Natural killer cell (primary cell): ENCODE measurements at regions of chr1 and their contacts with region 1.

Region 1: GRCh38 chr1:214471458-214471857 is 79.9 kb downstream of the PTPN14 start:
- DNase-seq: no peak
- ATAC-seq: no peak
- H3K4me3 ChIP-seq: no peak overlapping the region
- H3K4me3 Mint-ChIP-seq: no peak overlapping the region
- H3K27ac ChIP-seq: no peak overlapping the region
- H3K27ac Mint-ChIP-seq: no peak overlapping the region
- H3K4me1 ChIP-seq: no peaks in the 10 kb centered on the region
- H3K4me1 Mint-ChIP-seq: no peaks in the 10 kb centered on the region
- H3K27me3 ChIP-seq: no peaks in the 10 kb centered on the region
- H3K27me3 Mint-ChIP-seq: peaks cover 14 to 48% of the 10 kb centered on the region in 2 donors
- CTCF ChIP-seq: no peak

Region 2: DNA sequence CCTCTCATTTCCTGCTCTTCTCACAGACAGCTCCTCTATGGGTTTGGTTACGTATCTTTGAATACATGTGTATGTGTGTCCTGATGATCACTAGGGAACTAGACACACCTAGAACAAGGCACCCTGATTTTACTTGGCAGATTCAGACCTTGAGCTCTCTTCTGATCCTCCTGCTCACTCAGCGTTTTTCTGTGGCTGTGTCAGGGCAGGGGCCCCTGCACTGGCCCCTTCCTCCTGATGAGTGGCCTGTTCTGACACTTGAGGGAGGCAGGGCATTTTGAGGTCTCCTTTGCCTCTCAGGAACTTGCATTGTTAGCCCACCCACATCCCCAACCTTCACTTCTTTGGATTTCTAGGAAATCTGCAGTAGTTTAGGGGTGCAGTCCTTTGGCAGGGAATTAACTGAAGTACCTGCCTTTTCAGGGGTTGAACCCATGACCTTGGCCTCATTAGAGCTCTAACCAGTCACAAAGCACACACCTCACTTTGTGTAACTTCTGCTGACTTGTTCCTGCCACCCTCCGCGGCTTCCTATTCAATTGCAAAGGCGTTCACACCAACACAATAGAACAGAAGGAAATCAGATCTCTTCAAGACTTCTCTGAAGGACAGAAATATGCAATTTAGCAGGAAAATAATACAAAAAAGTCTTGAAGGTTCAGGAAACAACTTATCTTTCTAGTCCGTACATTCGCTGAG is 181.7 kb before region 1 on chr1:
- intact Hi-C with region 1: no loop called
- DNase-seq: no peak
- ATAC-seq: no peak
- H3K4me3 ChIP-seq: no peak overlapping the region
- H3K4me3 Mint-ChIP-seq: no peak overlapping the region
- H3K27ac ChIP-seq: no peak overlapping the region
- H3K27ac Mint-ChIP-seq: no peak overlapping the region
- H3K4me1 ChIP-seq: peaks cover 13% of the 10 kb centered on the region
- H3K4me1 Mint-ChIP-seq: peaks cover 31 to 50% of the 10 kb centered on the region in 2 donors
- H3K27me3 ChIP-seq: no peaks in the 10 kb centered on the region
- H3K27me3 Mint-ChIP-seq: no peaks in the 10 kb centered on the region
- CTCF ChIP-seq: no peak

Region 3: GRCh38 chr1:214439352-214440119 is 31.9 kb before region 1 on chr1:
- intact Hi-C with region 1: loop called (anchors 2 kb)
- DNase-seq: peak in 1 of 2 donors; percentile 26
- ATAC-seq: peak; percentile 43 to 75 (median 74)
- H3K4me3 ChIP-seq: peak overlapping the region; percentile 1
- H3K4me3 Mint-ChIP-seq: peak overlapping the region; percentile 69
- H3K27ac ChIP-seq: no peak overlapping the region
- H3K27ac Mint-ChIP-seq: peak overlapping the region; percentile 32 to 56
- H3K4me1 ChIP-seq: no peaks in the 10 kb centered on the region
- H3K4me1 Mint-ChIP-seq: peaks cover 28 to 36% of the 10 kb centered on the region in 2 donors
- H3K27me3 ChIP-seq: no peaks in the 10 kb centered on the region
- H3K27me3 Mint-ChIP-seq: peaks cover 0 to 8% of the 10 kb centered on the region in 2 donors
- CTCF ChIP-seq: no peak